ENCODE measurements at regions of chr12 and their contacts with region 1.

Region 1: DNA sequence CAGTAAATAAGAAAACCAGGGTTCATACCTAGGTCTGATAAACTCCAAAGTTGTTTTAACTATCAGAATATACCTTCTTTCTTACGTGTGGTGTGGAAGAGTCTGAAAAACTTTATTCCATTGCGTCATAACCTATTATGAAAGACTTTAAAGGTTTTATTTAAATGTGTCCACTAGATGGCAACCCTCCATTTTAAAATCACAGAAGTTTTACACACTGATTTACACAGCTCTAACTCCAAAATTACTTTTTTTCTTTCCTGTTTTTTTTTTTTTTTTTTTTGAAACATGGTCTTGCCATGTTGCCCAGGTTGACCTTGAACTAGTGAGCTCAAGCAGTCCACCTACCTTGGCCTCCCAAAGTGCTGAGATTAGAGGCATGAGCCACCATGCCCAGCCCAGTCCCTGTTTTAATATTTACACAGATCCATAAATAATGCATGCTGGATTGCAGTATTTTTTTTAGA is 17.3 kb upstream of the TMPRSS12 start:
- DNase-seq: peak in 1 of 5 donors; percentile 26
- H3K4me3 ChIP-seq: no peak overlapping the region
- H3K27ac ChIP-seq: peak overlapping the region in 1 of 2 donors; percentile 69
- H3K4me1 ChIP-seq: peaks cover 2% of the 10 kb centered on the region
- H3K27me3 ChIP-seq: no peaks in the 10 kb centered on the region
- CTCF ChIP-seq: peak; percentile 43 to 73 (median 56)
- EP300 ChIP-seq: no peak
- POLR2A ChIP-seq: no peak

Region 2: GRCh38 chr12:50918584-50919316 is 93.3 kb after region 1 on chr12:
- intact Hi-C with region 1: loop called in 1 of 4 experiments (anchors 5 kb)
- DNase-seq: no peak
- H3K4me3 ChIP-seq: no peak overlapping the region
- H3K27ac ChIP-seq: no peak overlapping the region
- H3K4me1 ChIP-seq: peaks cover 3% of the 10 kb centered on the region
- H3K27me3 ChIP-seq: no peaks in the 10 kb centered on the region
- CTCF ChIP-seq: no peak
- EP300 ChIP-seq: no peak
- POLR2A ChIP-seq: no peak

Region 3: DNA sequence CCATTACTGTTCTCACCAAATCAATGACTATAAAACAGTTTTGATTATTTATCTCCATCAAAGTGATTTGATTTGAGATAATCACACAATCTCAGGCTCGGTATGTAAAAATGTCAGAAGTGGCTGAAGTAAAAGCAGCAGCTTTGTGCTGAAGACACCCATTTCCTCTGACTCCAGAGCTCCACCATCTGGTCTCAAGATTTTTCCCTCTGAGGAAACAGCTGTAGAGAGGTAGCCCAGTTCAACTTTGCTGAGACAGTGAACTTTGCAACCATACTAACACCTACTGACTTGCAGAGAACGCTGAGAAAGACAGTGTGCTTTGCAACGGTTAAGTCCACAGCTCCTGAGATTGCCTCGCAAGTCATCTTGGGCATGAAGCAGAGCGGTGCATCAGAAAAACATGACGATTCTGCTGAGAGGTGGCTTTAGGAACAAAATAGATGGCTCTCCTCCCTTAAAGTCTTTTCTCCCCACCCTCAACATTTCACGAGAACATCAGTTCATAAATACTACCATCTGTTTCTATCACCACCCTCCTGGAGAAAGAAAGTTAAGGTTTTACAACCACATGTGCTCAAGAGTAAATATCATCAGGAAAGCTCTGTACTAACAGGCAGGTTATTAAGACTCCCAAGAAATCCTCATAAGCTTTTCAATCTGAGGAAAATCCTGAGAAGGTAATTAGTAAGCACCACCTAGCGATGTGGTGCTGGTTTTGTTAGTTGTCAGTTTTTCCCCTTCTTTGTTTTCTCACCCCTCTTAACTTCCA is 161.7 kb after region 1 on chr12:
- intact Hi-C with region 1: loop called (anchors 2 to 5 kb)
- DNase-seq: peak in 3 of 5 donors; percentile 30 to 63 (median 32)
- H3K4me3 ChIP-seq: no peak overlapping the region
- H3K27ac ChIP-seq: no peak overlapping the region
- H3K4me1 ChIP-seq: no peaks in the 10 kb centered on the region
- H3K27me3 ChIP-seq: no peaks in the 10 kb centered on the region
- CTCF ChIP-seq: peak in 2 of 3 donors; percentile 44 to 52
- EP300 ChIP-seq: no peak
- POLR2A ChIP-seq: no peak

Region 4: DNA sequence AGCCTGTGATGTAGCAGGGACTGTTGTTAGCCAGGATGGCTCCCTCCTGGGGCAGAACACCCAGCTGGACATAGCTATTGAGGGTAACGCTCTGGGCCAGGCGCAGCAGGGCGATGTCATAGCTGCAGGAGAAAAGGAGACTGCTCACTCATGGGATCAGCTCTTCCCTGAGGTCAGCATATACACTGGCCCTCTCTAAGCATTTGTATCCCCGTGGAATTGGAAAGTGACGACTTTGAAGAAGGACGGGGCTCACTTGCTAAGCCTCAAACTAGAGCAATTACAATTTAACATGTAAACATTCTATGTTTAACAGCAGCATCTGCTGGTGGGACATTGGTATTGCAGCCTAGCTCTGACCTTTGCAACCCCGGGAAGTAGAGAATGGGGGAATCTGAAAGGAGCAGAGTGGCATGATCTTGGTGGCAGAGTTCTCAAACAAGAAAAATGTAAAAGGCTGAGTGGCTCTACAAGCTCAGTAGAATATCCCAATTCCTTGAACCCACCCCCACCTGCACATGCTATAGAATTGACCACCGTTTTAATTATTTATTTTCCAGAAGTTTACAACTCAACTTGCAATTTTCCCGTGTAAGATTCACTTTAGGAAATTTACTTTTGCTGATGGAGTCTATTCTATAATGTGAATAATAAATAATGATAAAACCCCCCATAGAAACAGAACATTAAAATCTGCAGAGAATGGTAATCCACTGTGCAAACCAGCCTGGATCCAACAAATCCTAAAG is 516.0 kb after region 1 on chr12:
- intact Hi-C with region 1: loop called in 1 of 4 experiments (anchors 5 kb)
- DNase-seq: peak; percentile 51 to 74 (median 60)
- H3K4me3 ChIP-seq: no peak overlapping the region
- H3K27ac ChIP-seq: no peak overlapping the region
- H3K4me1 ChIP-seq: peaks cover 3% of the 10 kb centered on the region
- H3K27me3 ChIP-seq: no peaks in the 10 kb centered on the region
- CTCF ChIP-seq: peak; percentile 46 to 95 (median 94)
- EP300 ChIP-seq: no peak
- POLR2A ChIP-seq: no peak